ENCODE measurements at regions of chr3 and their contacts with region 1.

Region 1: DNA sequence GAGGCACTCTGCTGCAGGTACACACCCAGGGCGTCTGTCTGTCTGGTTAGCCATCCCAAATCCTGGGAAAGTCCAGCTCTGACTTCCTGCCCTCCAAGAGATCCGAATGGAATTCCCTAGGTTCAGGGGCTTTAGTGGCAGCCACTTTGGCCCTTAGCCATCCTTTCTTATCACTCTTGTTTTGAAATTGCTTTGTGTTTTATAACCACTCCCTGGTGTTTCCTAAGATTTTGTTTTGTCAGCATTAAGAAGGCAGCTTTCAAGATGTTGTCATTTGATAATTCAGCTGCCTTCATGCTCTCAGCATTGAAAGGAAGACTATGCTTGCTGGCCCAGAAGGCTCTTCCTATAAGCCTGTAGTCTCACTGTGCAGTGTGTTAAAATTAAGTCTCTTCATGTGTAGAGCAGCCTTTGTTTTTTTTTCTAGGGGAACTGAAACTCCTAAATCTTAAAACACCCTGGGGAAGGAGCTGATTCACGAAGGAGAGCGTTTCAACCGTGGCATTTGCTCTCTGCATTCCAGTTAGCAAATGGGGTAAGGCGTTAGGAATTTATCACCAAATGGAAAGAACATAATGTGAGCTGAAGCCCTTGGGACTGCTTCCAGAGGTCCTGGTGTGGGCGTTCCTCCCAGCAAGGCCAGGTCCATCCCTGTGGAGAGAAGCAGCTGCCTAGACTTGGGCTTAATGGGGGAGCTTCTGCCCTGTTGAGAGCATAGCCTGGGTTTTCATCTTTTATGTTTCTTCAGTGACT is 14.2 kb upstream of the CLEC3B start:
- DNase-seq: peak in 1 of 2 donors; percentile 89
- H3K4me3 ChIP-seq: peak overlapping the region; percentile 3 to 38
- H3K27ac ChIP-seq: peak overlapping the region; percentile 72 to 90
- H3K4me1 ChIP-seq: peaks cover 9 to 25% of the 10 kb centered on the region in 2 donors
- H3K27me3 ChIP-seq: no peaks in the 10 kb centered on the region
- CTCF ChIP-seq: no peak

Region 2: GRCh38 chr3:45026957-45027356 is 15.0 kb after region 1 on chr3:
- intact Hi-C with region 1: loop called (anchors 2 kb)
- DNase-seq: peak in 1 of 2 donors; percentile 90
- H3K4me3 ChIP-seq: peak overlapping the region in 1 of 2 donors; percentile 51
- H3K27ac ChIP-seq: peak overlapping the region; percentile 42 to 71
- H3K4me1 ChIP-seq: peaks cover 14 to 28% of the 10 kb centered on the region in 2 donors
- H3K27me3 ChIP-seq: no peaks in the 10 kb centered on the region
- CTCF ChIP-seq: no peak